HepG2 (cell line): ENCODE measurements at regions of chr5 and their contacts with region 1.

Region 1: GRCh38 chr5:71782771-71783770 is 64.0 kb downstream of the CARTPT start:
- DNase-seq: peak; percentile 32
- ATAC-seq: peak; percentile 80
- H3K4me3 ChIP-seq: peak overlapping the region in 2 of 3 experiments; percentile 4 to 42; a peak in 4 of 6 replicates
- H3K27ac ChIP-seq: no peak overlapping the region
- H3K4me1 ChIP-seq: peaks cover 12% of the 10 kb centered on the region
- H3K27me3 ChIP-seq: no peaks in the 10 kb centered on the region; a peak in 1 of 5 replicates
- CTCF ChIP-seq: peak; percentile 80
- EP300 ChIP-seq: no peak
- POLR2A ChIP-seq: no peak
- RAD21 ChIP-seq: peak; percentile 39; the same call in 1 of the 2 replicates

Region 2: GRCh38 chr5:71969444-71969843 is 186.4 kb after region 1 on chr5:
- CTCF ChIA-PET with region 1: no interaction called
- POLR2A ChIA-PET with region 1: no interaction called
- in situ Hi-C with region 1: no loop called
- intact Hi-C with region 1: no loop called
- DNase-seq: no peak
- ATAC-seq: no peak
- H3K4me3 ChIP-seq: no peak overlapping the region
- H3K27ac ChIP-seq: no peak overlapping the region
- H3K4me1 ChIP-seq: peaks cover 24% of the 10 kb centered on the region
- H3K27me3 ChIP-seq: no peaks in the 10 kb centered on the region
- CTCF ChIP-seq: no peak
- EP300 ChIP-seq: no peak
- POLR2A ChIP-seq: no peak
- RAD21 ChIP-seq: no peak

Region 3: GRCh38 chr5:72018146-72018803 is 235.2 kb after region 1 on chr5:
- CTCF ChIA-PET with region 1: interaction called, 25 read pairs
- POLR2A ChIA-PET with region 1: no interaction called
- in situ Hi-C with region 1: loop called (anchors 25 kb)
- intact Hi-C with region 1: loop called (anchors 1 kb)
- DNase-seq: peak; percentile 39
- ATAC-seq: peak; percentile 83
- H3K4me3 ChIP-seq: no peak overlapping the region
- H3K27ac ChIP-seq: no peak overlapping the region
- H3K4me1 ChIP-seq: peaks cover 6% of the 10 kb centered on the region; the same call in 1 of the 2 replicates
- H3K27me3 ChIP-seq: no peaks in the 10 kb centered on the region; a peak in 1 of 5 replicates
- CTCF ChIP-seq: peak; percentile 82
- EP300 ChIP-seq: no peak
- POLR2A ChIP-seq: no peak
- RAD21 ChIP-seq: peak; percentile 66; the same call in 1 of the 2 replicates